ENCODE measurements at regions of chr18 and their contacts with region 1.

Region 1: DNA sequence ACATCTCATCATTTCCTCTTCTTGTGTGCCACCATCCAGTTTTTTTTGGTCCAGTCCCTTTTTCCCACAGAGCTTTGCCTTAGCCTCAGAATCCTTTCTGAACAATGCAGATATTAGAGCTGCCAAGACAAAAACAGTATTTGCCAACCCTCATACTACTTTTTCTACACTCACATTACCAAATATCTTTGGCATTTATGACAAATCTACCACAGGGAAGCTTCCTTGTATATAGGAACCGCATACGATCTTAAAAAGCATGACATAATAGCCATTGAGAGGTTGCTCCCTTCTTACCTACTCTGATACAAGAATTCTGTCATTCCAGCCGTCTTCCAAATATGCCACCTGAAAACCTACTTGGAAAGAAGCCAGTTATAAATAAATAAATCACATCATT is 9.4 kb downstream of the ZNF24 start:
- DNase-seq: no peak
- ATAC-seq: no peak
- H3K4me3 ChIP-seq: no peak overlapping the region
- H3K27ac ChIP-seq: no peak overlapping the region
- H3K4me1 ChIP-seq: peaks cover 2% of the 10 kb centered on the region
- H3K27me3 ChIP-seq: no peaks in the 10 kb centered on the region

Region 2: DNA sequence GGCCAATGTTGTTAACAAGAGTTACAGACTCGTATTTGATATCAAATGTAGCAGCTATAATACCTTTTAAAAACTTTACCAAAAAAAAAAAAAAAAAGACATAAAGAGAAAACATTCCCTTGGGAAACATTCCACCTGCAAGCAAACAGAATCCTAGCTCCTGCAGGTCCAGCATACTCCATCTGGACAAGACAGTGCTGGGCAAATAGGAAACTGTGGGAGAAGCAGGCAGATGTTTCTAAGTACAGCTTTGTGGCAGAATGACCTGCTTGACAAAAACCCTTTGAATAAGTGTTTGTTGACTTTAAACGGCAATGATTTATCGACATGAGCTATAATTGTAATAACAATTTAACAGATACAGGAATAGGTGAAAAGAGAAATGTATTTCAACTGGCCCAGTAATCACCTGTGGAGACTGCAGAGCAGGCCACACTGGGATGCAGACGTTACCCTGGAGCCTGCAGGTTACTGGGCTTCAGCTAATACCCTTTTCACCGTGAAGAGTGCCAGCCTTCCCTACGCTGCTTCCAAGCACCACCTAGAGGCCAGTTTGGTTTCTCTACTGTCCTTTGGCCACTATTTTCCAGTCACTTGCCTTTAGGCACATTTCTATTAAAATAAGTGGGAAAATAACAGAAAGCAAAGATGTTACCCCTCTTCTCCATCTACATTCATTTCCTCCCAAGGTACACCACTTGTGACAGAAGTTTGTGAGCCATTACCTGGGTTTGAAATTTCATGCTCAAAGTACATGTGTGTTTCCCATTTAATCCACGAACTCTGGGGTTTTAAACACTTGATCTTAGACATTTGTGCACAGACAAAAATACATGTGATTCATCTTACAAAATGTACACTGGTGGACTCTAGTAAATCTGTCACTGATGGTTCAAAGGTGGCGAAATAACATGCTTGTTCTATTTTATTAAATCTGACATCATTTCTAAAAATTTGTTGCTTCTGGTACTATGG is 190.9 kb before region 1 on chr18:
- intact Hi-C with region 1: no loop called
- DNase-seq: peak in 1 of 3 donors; percentile 69
- ATAC-seq: peak; percentile 93
- H3K4me3 ChIP-seq: no peak overlapping the region
- H3K27ac ChIP-seq: no peak overlapping the region
- H3K4me1 ChIP-seq: no peaks in the 10 kb centered on the region
- H3K27me3 ChIP-seq: no peaks in the 10 kb centered on the region

Region 3: DNA sequence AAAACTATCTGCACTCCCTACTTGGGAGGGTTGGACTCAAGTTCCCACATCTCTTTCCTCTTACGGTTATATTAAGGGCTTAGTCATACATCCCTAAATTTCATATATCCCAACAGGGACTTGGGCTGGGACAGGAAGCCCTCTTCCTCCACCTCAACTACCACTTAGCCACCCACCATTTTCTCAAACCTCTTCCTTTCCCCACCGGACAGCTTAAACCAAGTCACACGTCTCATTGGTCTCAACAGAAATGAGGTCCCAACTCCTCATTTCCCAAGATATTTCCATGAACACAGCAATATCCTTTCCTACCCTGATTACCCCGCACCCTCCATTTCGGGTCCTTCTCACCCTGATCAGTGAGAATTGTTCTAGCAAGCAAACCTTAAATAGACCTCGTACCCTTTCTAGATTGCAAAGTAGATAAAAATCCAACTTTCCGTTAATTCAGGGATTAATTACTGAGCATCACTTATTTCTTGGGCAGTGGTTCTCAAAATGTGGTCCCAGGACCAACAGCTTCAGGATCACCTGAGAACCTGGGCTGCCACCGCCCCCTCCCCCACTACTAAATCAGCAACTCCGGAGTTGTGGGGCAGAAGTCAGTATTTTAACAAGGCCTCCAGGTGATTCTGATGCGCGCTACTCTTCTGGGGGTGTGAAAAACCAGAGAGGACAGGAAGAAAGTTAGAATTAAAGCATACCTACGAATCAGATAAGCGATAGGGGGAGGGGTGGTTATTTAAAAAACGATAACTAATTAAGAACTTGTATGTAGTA is 45.3 kb before region 1 on chr18:
- intact Hi-C with region 1: loop called in 1 of 4 experiments (anchors 10 kb)
- DNase-seq: peak in 1 of 3 donors; percentile 67
- ATAC-seq: peak; percentile 25 to 39
- H3K4me3 ChIP-seq: peak overlapping the region; percentile 72
- H3K27ac ChIP-seq: peak overlapping the region; percentile 32
- H3K4me1 ChIP-seq: peaks cover 7% of the 10 kb centered on the region
- H3K27me3 ChIP-seq: no peaks in the 10 kb centered on the region

Region 4: GRCh38 chr18:35296060-35296459 is 38.8 kb before region 1 on chr18:
- intact Hi-C with region 1: loop called in 1 of 4 experiments (anchors 5 kb)
- DNase-seq: no peak
- ATAC-seq: peak; percentile 76 to 83
- H3K4me3 ChIP-seq: no peak overlapping the region
- H3K27ac ChIP-seq: peak overlapping the region; percentile 59
- H3K4me1 ChIP-seq: peaks cover under 1% of the 10 kb centered on the region
- H3K27me3 ChIP-seq: no peaks in the 10 kb centered on the region